ENCODE measurements at regions of chr1 and their contacts with region 1.

Region 1: GRCh38 chr1:81366173-81366572 is 434.6 kb upstream of the ADGRL2 start:
- DNase-seq: no peak
- H3K4me3 ChIP-seq: no peak overlapping the region
- H3K27ac ChIP-seq: no peak overlapping the region
- H3K4me1 ChIP-seq: peaks cover 0 to 3% (median 0%) of the 10 kb centered on the region in 4 experiments; a peak in 1 of 7 replicates
- H3K27me3 ChIP-seq: no peaks in the 10 kb centered on the region; a peak in 1 of 7 replicates
- CTCF ChIP-seq: no peak
- EP300 ChIP-seq: no peak
- POLR2A ChIP-seq: no peak
- RAD21 ChIP-seq: no peak

Region 2: DNA sequence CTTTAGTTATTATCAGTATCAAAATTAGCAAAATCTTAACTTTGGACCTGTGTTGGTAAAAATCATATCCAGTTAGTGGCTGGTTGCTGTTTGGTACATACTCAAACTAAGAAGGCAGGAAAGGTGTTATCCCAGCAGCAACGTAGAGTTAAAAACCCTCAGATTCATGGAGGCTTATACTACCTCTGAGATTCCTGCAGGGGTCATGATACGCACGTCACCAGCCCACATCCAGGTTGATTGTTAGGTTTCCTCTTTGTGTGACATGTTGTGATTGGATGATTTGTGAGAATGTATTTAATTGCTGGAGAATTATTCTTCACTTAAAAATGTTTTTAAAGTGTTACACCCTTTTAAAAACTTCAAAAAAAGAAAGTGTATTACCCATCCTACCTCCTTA is 11.2 kb after region 1 on chr1:
- CTCF ChIA-PET with region 1: interaction called, 11 read pairs
- POLR2A ChIA-PET with region 1: no interaction called
- DNase-seq: no peak
- H3K4me3 ChIP-seq: no peak overlapping the region
- H3K27ac ChIP-seq: no peak overlapping the region
- H3K4me1 ChIP-seq: peaks cover 0 to 5% (median 4%) of the 10 kb centered on the region in 4 experiments; a peak in 4 of 7 replicates
- H3K27me3 ChIP-seq: no peaks in the 10 kb centered on the region
- CTCF ChIP-seq: peak; percentile 25 to 66 (median 58)
- EP300 ChIP-seq: no peak
- POLR2A ChIP-seq: no peak
- RAD21 ChIP-seq: peak; percentile 79 to 89